MCF 10A (cell line): ENCODE measurements at regions of chr2 and their contacts with region 1.

Region 1: DNA sequence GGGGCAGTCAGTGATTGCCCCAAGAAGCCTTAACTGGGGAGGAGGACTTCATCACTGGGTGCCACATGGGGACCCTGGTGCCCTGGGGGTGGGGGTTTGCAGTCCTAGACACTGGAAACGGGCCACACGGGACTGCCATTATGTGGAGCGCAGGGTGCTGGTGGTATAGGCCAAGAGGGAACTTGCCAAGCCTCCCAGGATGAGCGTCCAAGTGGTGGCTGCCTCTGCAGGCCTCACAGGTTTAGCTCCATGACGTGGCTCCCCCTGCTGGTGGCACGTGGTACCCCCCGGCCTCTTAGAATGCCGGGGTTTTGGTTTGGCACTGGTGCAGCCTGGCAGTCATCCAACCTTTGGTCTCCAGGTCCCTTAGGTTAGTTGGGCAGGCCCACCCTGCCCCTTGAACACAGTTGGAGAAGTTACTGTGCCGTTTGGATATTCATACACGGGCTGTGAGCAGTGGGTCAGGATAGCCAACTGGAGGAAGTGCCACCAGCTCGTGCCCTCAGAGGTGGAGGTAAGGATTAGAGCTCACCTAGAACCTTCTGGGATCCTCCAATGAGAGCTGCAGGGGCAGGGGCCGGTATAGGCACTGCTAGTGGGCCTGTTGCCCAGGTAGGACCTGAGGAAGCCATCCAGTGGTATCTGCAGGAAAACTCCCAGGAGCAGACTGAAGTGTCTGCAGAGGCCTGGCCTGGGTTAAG is 5.6 kb downstream of the PTMA start:
- DNase-seq: peak; percentile 94
- H3K4me3 Mint-ChIP-seq: no peak overlapping the region
- H3K27ac Mint-ChIP-seq: peak overlapping the region; percentile 49
- H3K4me1 Mint-ChIP-seq: peaks cover 31% of the 10 kb centered on the region
- H3K27me3 Mint-ChIP-seq: no peaks in the 10 kb centered on the region
- CTCF ChIP-seq: peak; percentile 91

Region 2: GRCh38 chr2:231563378-231563961 is 150.4 kb before region 1 on chr2:
- CTCF ChIA-PET with region 1: interaction called, 3 read pairs
- POLR2A ChIA-PET with region 1: no interaction called
- intact Hi-C with region 1: loop called (anchors 1 kb)
- DNase-seq: peak; percentile 70
- H3K4me3 Mint-ChIP-seq: no peak overlapping the region
- H3K27ac Mint-ChIP-seq: no peak overlapping the region
- H3K4me1 Mint-ChIP-seq: no peaks in the 10 kb centered on the region
- H3K27me3 Mint-ChIP-seq: no peaks in the 10 kb centered on the region
- CTCF ChIP-seq: peak; percentile 78

Region 3: GRCh38 chr2:231612179-231613053 is 101.5 kb before region 1 on chr2:
- CTCF ChIA-PET with region 1: interaction called, 60 read pairs
- POLR2A ChIA-PET with region 1: interaction called, 33 read pairs
- intact Hi-C with region 1: loop called (anchors 1 kb)
- DNase-seq: peak; percentile 95
- H3K4me3 Mint-ChIP-seq: peak overlapping the region; percentile 63
- H3K27ac Mint-ChIP-seq: peak overlapping the region; percentile 92
- H3K4me1 Mint-ChIP-seq: peaks cover 38% of the 10 kb centered on the region
- H3K27me3 Mint-ChIP-seq: no peaks in the 10 kb centered on the region
- CTCF ChIP-seq: peak; percentile 95

Region 4: DNA sequence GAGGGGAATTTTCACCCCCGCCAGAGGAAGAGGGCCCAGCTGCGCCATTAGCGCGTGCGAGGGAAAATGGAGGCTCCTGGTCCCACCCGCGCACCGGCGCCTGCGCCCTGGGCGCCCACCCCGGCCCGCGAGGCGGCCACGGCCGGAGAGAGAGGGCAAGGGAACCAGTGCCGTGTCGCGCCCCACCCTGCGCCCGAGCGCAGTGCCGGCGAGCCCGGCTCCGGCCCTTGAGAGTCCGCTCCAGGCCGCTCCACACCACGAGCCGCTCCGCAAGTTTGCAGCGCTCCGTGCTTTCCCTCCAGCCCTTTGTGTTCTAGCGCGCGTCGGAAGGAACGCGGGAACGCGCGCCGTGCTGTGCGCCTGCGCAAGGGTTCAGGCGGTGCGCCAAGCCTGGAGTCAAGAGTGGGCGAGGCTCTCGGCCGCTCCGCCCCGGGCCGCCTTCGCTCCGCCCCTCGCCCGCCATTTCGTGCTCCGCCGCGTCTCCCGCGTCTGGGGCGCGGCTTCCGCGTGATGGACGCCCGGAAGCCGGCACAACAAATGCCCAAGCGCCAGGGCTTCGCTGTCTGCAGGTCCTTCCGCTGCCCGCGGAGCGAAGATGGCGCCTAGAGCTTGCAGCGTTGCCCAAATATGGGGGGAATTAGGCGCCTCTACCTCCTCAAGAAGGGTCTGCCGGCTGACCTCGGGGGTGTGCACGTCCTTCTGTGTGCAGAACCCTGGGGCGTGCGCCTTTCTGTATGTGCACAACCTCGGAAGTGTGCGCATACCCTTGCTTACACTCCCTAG is 51.7 kb before region 1 on chr2:
- CTCF ChIA-PET with region 1: interaction called, 10 read pairs
- POLR2A ChIA-PET with region 1: interaction called, 4 read pairs
- intact Hi-C with region 1: no loop called
- DNase-seq: peak; percentile 97
- H3K4me3 Mint-ChIP-seq: peak overlapping the region; percentile 64
- H3K27ac Mint-ChIP-seq: peak overlapping the region; percentile 57
- H3K4me1 Mint-ChIP-seq: no peaks in the 10 kb centered on the region
- H3K27me3 Mint-ChIP-seq: no peaks in the 10 kb centered on the region
- CTCF ChIP-seq: no peak

Region 5: DNA sequence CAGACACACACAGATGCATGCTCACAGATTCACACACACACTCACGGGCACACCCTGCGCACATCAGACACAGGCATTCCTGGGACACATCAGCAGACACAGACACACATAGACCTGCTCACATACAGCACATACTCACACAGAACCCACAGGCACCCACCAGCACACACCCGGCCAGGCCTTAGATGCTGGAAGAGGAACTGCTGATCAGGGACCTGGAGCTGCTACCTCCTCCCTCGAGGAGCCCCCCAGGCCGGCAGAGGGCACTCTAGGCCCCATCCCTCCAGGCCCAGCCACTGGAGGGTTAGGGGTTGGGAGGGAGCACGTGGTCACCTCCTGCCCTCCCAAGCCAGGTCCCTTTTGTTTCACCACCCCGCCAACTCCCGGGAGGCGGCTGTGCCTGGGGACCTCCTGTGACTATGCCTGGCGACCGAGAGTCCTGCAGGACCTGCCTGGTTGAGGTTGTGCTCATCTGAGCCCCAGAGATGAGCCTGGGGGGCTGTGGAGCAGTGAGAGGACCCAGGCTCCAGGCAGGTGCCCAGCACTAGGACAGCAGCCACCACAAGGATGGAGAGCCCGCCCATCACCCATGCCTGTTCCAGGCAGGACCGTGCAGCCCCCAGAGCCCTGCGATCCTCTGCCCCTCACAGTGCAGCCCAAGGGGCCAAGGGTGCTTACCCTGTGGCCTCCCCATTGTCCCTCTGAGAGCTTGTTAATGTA is 26.6 kb before region 1 on chr2:
- CTCF ChIA-PET with region 1: interaction called, 39 read pairs
- POLR2A ChIA-PET with region 1: interaction called, 5 read pairs
- intact Hi-C with region 1: no loop called
- DNase-seq: peak; percentile 71
- H3K4me3 Mint-ChIP-seq: no peak overlapping the region
- H3K27ac Mint-ChIP-seq: no peak overlapping the region
- H3K4me1 Mint-ChIP-seq: peaks cover 3% of the 10 kb centered on the region
- H3K27me3 Mint-ChIP-seq: no peaks in the 10 kb centered on the region
- CTCF ChIP-seq: no peak

Region 6: DNA sequence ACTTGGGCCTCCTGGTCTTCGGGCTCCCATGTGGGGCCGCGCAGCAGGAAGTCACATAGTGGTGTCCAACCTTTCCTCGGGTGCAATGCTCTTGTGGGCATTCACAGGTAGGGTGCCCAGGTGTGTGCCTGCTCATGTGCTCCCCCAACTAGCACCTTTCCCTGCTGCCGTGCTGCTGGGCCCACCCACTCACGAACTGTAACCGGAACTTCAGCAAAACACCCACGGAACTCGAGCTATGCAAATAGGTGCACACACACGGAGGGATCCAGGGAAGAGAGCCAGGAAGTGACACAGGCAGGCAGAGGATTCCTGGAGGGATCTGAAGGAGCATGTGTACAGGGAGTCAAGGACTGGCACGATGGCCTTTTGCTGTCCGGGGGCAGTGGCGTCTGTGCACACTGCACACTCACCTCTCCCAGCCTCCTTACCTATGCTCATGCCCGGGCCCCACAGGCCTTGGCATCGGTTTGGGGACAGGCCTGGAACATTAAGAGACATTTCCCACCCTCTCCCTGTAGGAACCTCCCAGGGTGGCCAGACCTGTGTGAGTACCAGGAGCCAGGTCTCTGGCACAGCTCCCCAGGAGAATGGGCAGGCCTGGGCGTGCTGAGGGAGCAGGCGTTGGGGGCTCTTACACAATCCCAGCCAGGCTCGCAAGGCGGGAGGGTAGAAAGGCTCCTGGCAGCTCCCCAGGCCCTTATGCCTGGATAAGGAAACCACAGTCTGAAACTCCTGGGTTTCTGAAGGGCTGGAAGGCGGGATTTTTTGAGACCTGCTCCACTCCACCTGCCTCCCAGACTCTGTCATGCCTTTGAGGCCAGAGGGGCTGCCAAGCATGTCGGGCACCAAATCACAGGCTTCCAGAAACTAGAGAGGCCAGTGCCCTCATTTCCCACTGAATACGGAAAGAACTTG is 12.2 kb before region 1 on chr2:
- CTCF ChIA-PET with region 1: interaction called, 40 read pairs
- POLR2A ChIA-PET with region 1: interaction called, 11 read pairs
- intact Hi-C with region 1: no loop called
- DNase-seq: peak; percentile 98
- H3K4me3 Mint-ChIP-seq: peak overlapping the region; percentile 58
- H3K27ac Mint-ChIP-seq: peak overlapping the region; percentile 71
- H3K4me1 Mint-ChIP-seq: peaks cover 11% of the 10 kb centered on the region
- H3K27me3 Mint-ChIP-seq: no peaks in the 10 kb centered on the region
- CTCF ChIP-seq: no peak

Region 7: DNA sequence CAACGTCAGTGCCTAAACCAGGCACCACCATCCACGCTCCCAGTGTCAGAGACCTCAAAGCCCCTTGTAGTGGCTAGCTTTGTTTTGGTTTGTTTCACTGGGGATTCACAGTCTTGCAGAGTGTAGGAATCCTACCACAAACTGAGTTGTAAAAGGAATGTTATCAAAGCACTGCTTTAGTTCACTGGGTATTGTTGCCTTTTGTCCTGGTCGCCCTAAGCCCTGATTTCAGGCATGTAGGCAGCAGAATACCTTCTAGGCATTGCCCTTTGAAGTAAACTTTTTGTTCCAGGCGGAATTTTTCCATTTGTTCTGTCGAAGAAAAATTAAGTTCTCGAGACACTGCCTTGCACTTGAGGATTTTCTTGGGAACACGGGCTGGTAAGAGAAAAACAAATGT is 23.9 kb after region 1 on chr2:
- CTCF ChIA-PET with region 1: interaction called, 15 read pairs
- POLR2A ChIA-PET with region 1: no interaction called
- intact Hi-C with region 1: no loop called
- DNase-seq: no peak
- H3K4me3 Mint-ChIP-seq: no peak overlapping the region
- H3K27ac Mint-ChIP-seq: no peak overlapping the region
- H3K4me1 Mint-ChIP-seq: no peaks in the 10 kb centered on the region
- H3K27me3 Mint-ChIP-seq: no peaks in the 10 kb centered on the region
- CTCF ChIP-seq: no peak